ENCODE measurements at regions of chr3 and their contacts with region 1.

Region 1: GRCh38 chr3:38521391-38521987 is 25.3 kb downstream of the EXOG start:
- DNase-seq: peak; percentile 76
- H3K4me3 Mint-ChIP-seq: no peak overlapping the region
- H3K27ac Mint-ChIP-seq: no peak overlapping the region
- H3K4me1 Mint-ChIP-seq: no peaks in the 10 kb centered on the region
- H3K27me3 Mint-ChIP-seq: no peaks in the 10 kb centered on the region
- CTCF ChIP-seq: peak; percentile 87

Region 2: DNA sequence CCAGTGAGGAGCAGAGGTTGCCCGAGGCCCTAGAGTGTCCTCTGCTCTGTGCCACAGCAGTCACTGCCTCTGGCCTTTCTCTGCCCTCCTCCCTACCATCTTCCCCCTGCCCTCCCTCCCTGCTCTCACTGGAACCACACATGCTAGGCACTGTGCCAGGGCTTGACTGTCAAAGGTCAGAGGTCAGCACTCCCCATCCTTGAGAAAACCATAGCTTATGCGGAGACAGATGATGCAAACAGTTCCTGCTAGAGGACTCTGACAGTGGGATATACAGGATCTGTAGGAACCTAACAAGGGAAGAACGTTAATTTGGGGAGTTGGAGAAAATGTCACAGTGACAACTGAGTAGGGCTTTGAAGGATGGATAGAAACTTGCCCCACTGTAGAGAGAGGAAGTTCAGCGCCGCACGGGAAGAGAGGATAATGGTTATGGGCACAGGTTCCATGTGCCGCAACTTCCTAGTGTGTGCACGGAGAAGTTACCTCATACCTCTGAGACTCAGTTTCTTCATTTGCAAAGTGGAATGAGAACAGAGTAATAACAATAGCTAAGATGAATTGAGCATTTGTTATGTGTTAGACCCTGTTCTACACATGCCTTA is 204.2 kb before region 1 on chr3:
- CTCF ChIA-PET with region 1: no interaction called
- POLR2A ChIA-PET with region 1: no interaction called
- intact Hi-C with region 1: no loop called
- DNase-seq: peak; percentile 28
- H3K4me3 Mint-ChIP-seq: no peak overlapping the region
- H3K27ac Mint-ChIP-seq: no peak overlapping the region
- H3K4me1 Mint-ChIP-seq: no peaks in the 10 kb centered on the region
- H3K27me3 Mint-ChIP-seq: no peaks in the 10 kb centered on the region
- CTCF ChIP-seq: no peak

Region 3: GRCh38 chr3:38496131-38496910 is 25.2 kb before region 1 on chr3 and contains the start of gene EXOG:
- CTCF ChIA-PET with region 1: interaction called, 25 read pairs
- POLR2A ChIA-PET with region 1: no interaction called
- intact Hi-C with region 1: no loop called
- DNase-seq: peak; percentile 91
- H3K4me3 Mint-ChIP-seq: peak within 1 kb of the TSS; percentile 78
- H3K27ac Mint-ChIP-seq: peak within 1 kb of the TSS; percentile 33
- H3K4me1 Mint-ChIP-seq: peaks cover 9% of the 10 kb centered on the region
- H3K27me3 Mint-ChIP-seq: no peaks in the 10 kb centered on the region
- CTCF ChIP-seq: peak; percentile 82
- total RNA-seq, gene EXOG: 17.5 and 21.9 TPM in 2 replicates

Region 4: DNA sequence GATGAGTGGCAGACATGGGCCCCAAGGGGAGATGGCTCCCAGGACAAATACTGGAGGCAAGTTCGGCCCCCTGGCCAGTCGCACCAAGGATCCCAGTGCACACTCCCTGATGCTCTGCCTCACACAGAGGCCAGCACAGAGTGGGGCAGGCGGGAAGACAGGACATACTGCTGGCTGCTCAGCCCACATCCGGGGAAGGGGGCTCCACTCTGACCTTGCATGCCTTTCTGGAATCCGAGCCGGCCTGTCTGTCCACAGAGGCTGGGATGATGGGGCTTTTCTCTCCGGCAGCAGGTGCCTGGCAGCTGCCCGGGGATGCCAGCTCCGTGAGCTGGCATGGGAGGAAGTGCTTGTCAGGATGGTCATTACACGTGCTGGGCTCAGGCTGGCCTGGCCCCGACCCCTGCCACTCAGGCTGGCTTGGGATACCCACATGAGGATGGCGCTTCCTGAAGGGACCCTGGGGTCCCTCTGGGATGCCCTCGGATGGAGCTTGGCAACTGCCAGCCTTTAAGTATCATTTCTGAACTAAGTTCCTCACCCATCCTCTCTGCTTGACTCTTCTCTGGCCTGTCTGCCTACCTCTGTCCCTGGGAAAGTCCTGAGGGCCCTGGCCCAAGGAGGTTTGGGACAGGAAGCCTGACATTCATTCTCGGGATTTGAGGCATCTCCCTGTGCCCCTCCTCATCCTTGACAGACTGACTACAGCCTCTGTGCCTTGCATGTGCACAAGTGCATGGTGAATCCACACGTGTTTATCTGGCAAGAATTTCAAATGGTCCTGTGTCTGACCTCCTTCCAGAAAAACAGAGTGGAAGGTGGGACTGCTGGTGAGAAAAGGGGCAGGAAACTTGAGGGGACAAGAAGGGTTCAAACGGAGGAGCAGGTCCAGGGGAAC is 21.2 kb after region 1 on chr3:
- CTCF ChIA-PET with region 1: interaction called, 37 read pairs
- POLR2A ChIA-PET with region 1: no interaction called
- intact Hi-C with region 1: no loop called
- DNase-seq: no peak
- H3K4me3 Mint-ChIP-seq: no peak overlapping the region
- H3K27ac Mint-ChIP-seq: no peak overlapping the region
- H3K4me1 Mint-ChIP-seq: no peaks in the 10 kb centered on the region
- H3K27me3 Mint-ChIP-seq: peaks cover 14% of the 10 kb centered on the region
- CTCF ChIP-seq: no peak

Region 5: GRCh38 chr3:38651154-38651789 is 129.8 kb after region 1 on chr3:
- CTCF ChIA-PET with region 1: interaction called, 239 read pairs
- POLR2A ChIA-PET with region 1: interaction called, 4 read pairs
- intact Hi-C with region 1: loop called (anchors 1 kb)
- DNase-seq: peak; percentile 59
- H3K4me3 Mint-ChIP-seq: no peak overlapping the region
- H3K27ac Mint-ChIP-seq: no peak overlapping the region
- H3K4me1 Mint-ChIP-seq: no peaks in the 10 kb centered on the region
- H3K27me3 Mint-ChIP-seq: no peaks in the 10 kb centered on the region
- CTCF ChIP-seq: peak; percentile 83

Region 6: DNA sequence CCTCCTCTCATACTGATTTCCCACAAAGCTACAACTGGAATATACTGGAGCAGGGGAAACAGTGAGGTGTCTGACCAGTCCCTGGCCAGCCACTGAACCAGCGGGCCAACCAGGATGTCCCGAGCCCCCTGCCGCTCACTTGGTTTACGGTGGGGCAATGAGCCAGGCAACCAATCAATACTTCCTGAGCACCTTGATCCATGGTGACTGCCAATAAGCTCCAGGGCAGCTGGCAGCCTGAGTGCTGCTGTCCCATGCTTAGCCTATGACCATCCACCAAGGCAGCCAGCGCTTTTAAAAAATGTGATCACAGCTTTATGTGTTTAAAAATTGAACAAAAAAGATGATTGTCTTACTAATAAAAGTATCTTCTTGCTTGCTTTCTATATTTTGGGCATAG is 290.3 kb after region 1 on chr3:
- CTCF ChIA-PET with region 1: no interaction called
- POLR2A ChIA-PET with region 1: no interaction called
- intact Hi-C with region 1: no loop called
- DNase-seq: no peak
- H3K4me3 Mint-ChIP-seq: no peak overlapping the region
- H3K27ac Mint-ChIP-seq: no peak overlapping the region
- H3K4me1 Mint-ChIP-seq: no peaks in the 10 kb centered on the region
- H3K27me3 Mint-ChIP-seq: peaks cover 53% of the 10 kb centered on the region
- CTCF ChIP-seq: no peak

Region 7: GRCh38 chr3:38843898-38844297 is 322.4 kb after region 1 on chr3:
- CTCF ChIA-PET with region 1: interaction called, 24 read pairs
- POLR2A ChIA-PET with region 1: no interaction called
- intact Hi-C with region 1: loop called (anchors 1 kb)
- DNase-seq: peak; percentile 55
- H3K4me3 Mint-ChIP-seq: no peak overlapping the region
- H3K27ac Mint-ChIP-seq: no peak overlapping the region
- H3K4me1 Mint-ChIP-seq: no peaks in the 10 kb centered on the region
- H3K27me3 Mint-ChIP-seq: peaks cover 71% of the 10 kb centered on the region
- CTCF ChIP-seq: peak; percentile 53

Region 8: DNA sequence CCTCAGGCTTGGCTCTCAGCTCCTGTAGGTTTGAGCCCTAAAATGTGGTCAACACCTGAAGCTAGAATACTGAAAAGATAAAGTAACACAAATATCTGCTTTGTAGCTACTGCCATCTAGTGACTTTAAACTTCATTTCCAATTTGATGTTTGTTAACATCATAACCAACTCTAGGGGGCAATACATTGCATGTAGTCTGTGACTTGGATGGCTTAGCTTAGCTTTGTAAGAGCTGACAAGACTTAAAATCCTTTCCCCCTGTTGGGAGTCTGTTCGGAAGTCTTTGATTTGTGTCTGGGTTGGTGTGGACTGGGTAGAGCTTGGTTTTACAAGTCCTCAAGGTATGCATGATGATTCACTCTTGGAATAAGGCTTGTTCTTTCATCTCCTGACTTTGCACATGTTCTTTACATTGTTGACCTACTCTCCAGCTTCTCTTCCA is 478.5 kb after region 1 on chr3:
- CTCF ChIA-PET with region 1: interaction called, 170 read pairs
- POLR2A ChIA-PET with region 1: interaction called, 5 read pairs
- intact Hi-C with region 1: loop called (anchors 1 kb)
- DNase-seq: peak; percentile 55
- H3K4me3 Mint-ChIP-seq: no peak overlapping the region
- H3K27ac Mint-ChIP-seq: no peak overlapping the region
- H3K4me1 Mint-ChIP-seq: peaks cover 6% of the 10 kb centered on the region
- H3K27me3 Mint-ChIP-seq: peaks cover 48% of the 10 kb centered on the region
- CTCF ChIP-seq: peak; percentile 78

Region 9: DNA sequence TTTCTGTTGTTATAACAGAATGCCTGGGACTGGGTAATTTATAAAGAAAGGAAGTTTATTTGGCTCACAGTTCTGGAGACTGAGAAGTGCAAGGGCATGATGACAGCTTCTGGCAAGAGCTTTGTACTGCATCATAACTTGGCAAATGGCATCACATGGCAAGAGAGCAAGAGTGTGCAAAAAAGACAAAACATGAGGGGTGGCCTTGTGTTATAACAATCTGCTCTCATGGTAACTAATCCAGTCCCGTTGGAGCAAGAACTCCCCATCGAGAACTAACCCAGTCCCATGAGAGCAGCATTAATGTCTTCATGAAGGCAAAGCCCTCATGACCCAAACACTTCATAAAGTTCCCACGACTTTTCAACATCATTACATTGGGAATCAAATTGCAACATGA is 507.1 kb after region 1 on chr3:
- CTCF ChIA-PET with region 1: interaction called, 63 read pairs
- POLR2A ChIA-PET with region 1: no interaction called
- intact Hi-C with region 1: loop called (anchors 1 kb)
- DNase-seq: no peak
- H3K4me3 Mint-ChIP-seq: no peak overlapping the region
- H3K27ac Mint-ChIP-seq: no peak overlapping the region
- H3K4me1 Mint-ChIP-seq: no peaks in the 10 kb centered on the region
- H3K27me3 Mint-ChIP-seq: peaks cover 58% of the 10 kb centered on the region
- CTCF ChIP-seq: no peak

Measured in MCF 10A (cell line).